A549 (cell line): ENCODE measurements at regions of chr22 and their contacts with region 1.

Region 1: GRCh38 chr22:38114484-38115398 is 4.3 kb upstream of the BAIAP2L2 start:
- DNase-seq: peak; percentile 67 to 82
- ATAC-seq: peak; percentile 59 to 84
- H3K4me3 ChIP-seq: no peak overlapping the region
- H3K27ac ChIP-seq: no peak overlapping the region
- H3K4me1 ChIP-seq: peaks cover 27% of the 10 kb centered on the region
- CTCF ChIP-seq: peak; percentile 72
- EP300 ChIP-seq: no peak
- POLR2A ChIP-seq: no peak
- RAD21 ChIP-seq: peak; percentile 63 to 66

Region 2: DNA sequence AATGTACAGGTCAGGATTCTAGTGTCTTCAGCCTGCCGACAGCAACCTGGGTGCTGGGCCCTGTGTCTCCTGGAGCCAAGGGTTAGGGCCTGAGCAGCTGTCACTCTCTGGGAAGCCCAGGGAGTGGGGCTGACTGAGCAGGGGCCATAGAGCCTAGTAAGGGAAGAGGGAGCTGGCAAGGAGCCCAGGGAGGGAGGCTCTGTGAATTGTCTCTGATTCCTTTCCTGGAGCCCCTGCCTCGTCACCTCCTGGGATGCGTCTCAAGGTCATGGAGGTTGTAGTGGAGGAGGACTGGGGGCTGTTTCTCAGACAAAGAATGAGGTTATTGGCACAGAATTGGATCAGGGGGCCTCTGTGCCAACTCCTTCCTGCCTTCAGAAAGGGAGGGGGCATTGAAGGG is 142.2 kb before region 1 on chr22:
- CTCF ChIA-PET with region 1: no interaction called
- POLR2A ChIA-PET with region 1: no interaction called
- DNase-seq: no peak
- ATAC-seq: no peak
- H3K4me3 ChIP-seq: no peak overlapping the region
- H3K27ac ChIP-seq: no peak overlapping the region
- H3K4me1 ChIP-seq: no peaks in the 10 kb centered on the region
- CTCF ChIP-seq: no peak
- EP300 ChIP-seq: no peak
- POLR2A ChIP-seq: no peak
- RAD21 ChIP-seq: no peak

Region 3: GRCh38 chr22:38017272-38017920 is 97.3 kb before region 1 on chr22:
- CTCF ChIA-PET with region 1: no interaction called
- POLR2A ChIA-PET with region 1: no interaction called
- DNase-seq: no peak
- ATAC-seq: peak in 1 of 2 experiments; percentile 48; a peak in 4 of 6 replicates
- H3K4me3 ChIP-seq: no peak overlapping the region
- H3K27ac ChIP-seq: no peak overlapping the region
- H3K4me1 ChIP-seq: no peaks in the 10 kb centered on the region
- CTCF ChIP-seq: no peak
- EP300 ChIP-seq: no peak
- POLR2A ChIP-seq: no peak
- RAD21 ChIP-seq: no peak

Region 4: GRCh38 chr22:38069372-38070249 is 45.1 kb before region 1 on chr22:
- CTCF ChIA-PET with region 1: interaction called, 10 read pairs
- POLR2A ChIA-PET with region 1: no interaction called
- DNase-seq: peak in 1 of 2 experiments; percentile 45
- ATAC-seq: peak; percentile 58 to 83; a peak in 4 of 6 replicates
- H3K4me3 ChIP-seq: no peak overlapping the region
- H3K27ac ChIP-seq: no peak overlapping the region
- H3K4me1 ChIP-seq: no peaks in the 10 kb centered on the region
- CTCF ChIP-seq: peak; percentile 49
- EP300 ChIP-seq: no peak
- POLR2A ChIP-seq: no peak
- RAD21 ChIP-seq: peak; percentile 66 to 67

Region 5: DNA sequence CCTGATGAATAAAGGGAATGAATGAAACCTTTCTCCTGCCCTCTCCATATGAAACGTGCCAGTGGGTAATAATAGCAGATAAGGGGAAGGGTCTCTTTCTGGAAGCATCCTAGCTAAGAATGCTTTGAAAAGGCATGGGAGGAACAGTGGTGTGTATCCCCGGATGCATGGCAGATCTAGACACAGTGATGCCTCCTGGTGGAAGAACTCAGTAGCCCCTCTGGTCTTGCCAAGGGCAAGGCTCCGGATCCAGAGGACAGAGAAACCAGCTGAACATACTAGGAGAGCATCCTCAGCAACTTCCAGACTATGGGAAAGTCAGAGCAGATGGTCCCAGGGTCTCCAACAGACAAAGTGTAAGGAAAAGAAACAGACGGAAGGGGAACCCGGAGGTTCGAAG is 10.7 kb before region 1 on chr22:
- CTCF ChIA-PET with region 1: interaction called, 24 read pairs
- POLR2A ChIA-PET with region 1: no interaction called
- DNase-seq: peak; percentile 44 to 50
- ATAC-seq: peak; percentile 41 to 65; a peak in 4 of 6 replicates
- H3K4me3 ChIP-seq: no peak overlapping the region
- H3K27ac ChIP-seq: no peak overlapping the region
- H3K4me1 ChIP-seq: peaks cover 20% of the 10 kb centered on the region
- CTCF ChIP-seq: no peak; the same call in 2 of the 3 replicates
- EP300 ChIP-seq: no peak
- POLR2A ChIP-seq: no peak
- RAD21 ChIP-seq: peak in 1 of 2 experiments; percentile 28; a peak in 1 of 5 replicates

Region 6: DNA sequence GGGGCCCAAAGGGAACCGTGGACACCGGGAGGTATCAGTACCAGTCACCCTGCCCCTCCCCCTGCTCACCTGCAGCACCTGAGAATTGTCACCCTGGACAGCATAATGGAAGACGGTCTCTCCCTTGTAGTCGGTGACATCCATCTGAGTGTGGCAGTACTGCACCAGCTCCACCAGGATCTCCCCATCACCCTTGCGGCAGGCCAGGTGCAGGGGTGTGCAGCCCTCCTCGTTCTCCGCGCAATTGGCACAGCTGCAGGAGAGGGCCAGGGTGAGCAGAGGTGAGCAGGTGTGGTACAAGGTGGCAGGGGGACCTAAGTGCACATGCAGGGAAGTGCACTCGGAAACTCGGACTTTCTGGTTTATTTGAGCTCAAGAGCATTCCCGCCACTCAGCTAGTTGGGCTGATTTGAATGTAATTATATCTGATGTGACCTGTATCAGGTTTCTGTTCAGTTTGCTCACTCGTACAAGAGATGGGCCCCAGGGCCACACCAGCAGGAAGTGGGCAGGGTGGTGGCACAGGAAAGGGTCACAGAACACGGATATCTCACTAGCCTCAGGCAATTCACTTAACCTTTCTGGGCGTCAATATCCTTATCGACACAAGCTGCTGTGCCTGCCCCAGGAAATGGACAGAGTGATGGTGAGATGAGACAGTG is 28.4 kb after region 1 on chr22:
- CTCF ChIA-PET with region 1: interaction called, 16 read pairs
- POLR2A ChIA-PET with region 1: no interaction called
- DNase-seq: no peak
- ATAC-seq: no peak
- H3K4me3 ChIP-seq: no peak overlapping the region
- H3K27ac ChIP-seq: no peak overlapping the region
- H3K4me1 ChIP-seq: peaks cover 12% of the 10 kb centered on the region
- CTCF ChIP-seq: no peak
- EP300 ChIP-seq: no peak
- POLR2A ChIP-seq: no peak
- RAD21 ChIP-seq: no peak

Region 7: DNA sequence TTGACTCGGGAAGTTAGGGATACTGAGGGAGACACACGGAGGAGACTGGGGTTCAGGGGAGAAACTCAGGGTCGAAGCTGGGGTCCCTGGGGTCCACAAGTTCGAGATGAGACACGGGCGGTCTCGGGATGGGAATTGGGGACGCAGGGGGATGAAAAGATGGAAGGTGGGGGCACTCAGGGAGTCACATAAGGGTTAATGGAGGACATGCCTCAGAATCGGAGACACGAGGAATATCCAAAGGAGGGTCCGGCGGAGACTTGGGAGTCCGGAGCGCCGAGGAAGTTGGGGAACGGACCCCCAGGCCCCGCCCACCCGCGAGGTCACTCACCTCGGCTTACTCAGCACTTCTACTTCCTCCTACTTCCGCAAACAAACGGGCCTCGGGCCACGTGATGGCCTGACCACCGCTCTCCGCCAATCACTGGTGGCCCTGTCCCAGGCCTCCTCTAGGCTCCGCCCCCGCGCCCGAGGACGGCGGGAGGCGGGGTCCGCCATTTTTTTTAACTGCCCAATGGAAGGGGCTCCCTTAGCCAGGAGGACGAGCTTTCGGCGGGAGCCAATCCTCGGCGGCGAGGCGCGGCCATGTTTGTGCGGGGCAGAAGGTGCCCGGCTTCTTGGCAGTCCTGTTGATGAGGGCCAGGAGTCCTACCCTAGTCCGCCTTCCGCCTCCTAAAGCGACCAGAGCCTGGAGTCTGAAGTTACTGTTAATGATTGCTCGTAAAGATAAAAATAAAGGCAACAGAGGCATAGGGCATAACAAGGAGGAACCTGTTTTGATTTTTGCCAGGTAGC is 66.9 kb after region 1 on chr22 and contains the start of gene PLA2G6:
- CTCF ChIA-PET with region 1: interaction called, 19 read pairs
- POLR2A ChIA-PET with region 1: interaction called, 6 read pairs
- DNase-seq: peak; percentile 91 to 98
- ATAC-seq: peak; percentile 92
- H3K4me3 ChIP-seq: peak within 1 kb of the TSS; percentile 58
- H3K27ac ChIP-seq: peak within 1 kb of the TSS; percentile 92 to 94
- H3K4me1 ChIP-seq: peaks cover 42% of the 10 kb centered on the region
- CTCF ChIP-seq: no peak
- EP300 ChIP-seq: no peak
- POLR2A ChIP-seq: 0 out of 2 replicates have a peak, but pooled peaks have one; percentile 12
- RAD21 ChIP-seq: no peak
- polyA plus RNA-seq, gene PLA2G6: 7.4 and 10.7 TPM in 2 replicates